ENCODE measurements at regions of chr1 and their contacts with region 1.

Region 1: DNA sequence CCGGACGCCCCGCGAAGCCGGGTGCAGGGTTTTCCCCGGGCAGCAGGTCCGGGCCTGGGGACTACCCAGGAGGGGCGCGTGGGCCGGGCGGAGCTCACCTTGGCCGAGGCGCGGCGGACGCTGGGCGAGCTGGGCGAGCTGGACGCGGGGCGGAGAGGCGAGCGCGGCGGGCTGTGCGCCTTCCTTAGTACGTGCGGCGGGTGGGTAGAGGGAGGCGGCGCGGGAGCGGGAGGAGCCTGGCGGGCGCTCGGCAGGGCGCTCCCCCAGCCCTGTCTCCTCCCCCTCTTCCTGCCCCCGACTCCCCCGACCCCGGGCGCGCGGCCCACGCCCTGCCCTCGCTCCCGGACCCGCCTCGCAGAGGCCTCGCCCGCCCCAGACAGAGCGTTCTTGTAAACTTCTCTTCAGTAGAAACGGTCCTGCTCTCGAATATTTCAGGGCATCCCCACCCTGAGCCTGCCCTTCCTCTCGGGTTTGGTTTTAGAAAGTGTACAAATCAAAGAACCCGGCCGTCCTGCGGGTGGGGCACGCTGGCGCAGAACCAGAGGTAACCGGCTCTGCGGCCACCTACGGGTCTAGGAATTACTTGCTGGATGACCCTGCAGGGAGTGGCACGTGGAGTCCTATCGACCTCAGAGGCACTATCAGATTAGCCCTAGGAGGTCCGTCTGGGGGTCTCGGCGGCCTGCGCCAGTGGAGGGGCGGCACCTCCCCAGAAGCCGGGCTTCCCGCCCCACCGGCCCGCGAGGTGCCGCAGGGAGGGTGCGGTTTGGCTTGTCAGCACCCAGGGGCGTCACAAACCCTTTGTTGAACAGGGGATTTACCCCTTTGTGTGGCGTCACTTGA is at the start of gene S100A10:
- DNase-seq: peak; percentile 92
- H3K4me3 ChIP-seq: peak within 1 kb of the TSS; percentile 94
- H3K27ac ChIP-seq: peak within 1 kb of the TSS; percentile 99
- H3K4me1 ChIP-seq: peaks cover 77% of the 10 kb centered on the region
- H3K27me3 ChIP-seq: no peaks in the 10 kb centered on the region
- CTCF ChIP-seq: no peak
- total RNA-seq, gene S100A10: 966 and 1,436 TPM in 2 replicates

Region 2: DNA sequence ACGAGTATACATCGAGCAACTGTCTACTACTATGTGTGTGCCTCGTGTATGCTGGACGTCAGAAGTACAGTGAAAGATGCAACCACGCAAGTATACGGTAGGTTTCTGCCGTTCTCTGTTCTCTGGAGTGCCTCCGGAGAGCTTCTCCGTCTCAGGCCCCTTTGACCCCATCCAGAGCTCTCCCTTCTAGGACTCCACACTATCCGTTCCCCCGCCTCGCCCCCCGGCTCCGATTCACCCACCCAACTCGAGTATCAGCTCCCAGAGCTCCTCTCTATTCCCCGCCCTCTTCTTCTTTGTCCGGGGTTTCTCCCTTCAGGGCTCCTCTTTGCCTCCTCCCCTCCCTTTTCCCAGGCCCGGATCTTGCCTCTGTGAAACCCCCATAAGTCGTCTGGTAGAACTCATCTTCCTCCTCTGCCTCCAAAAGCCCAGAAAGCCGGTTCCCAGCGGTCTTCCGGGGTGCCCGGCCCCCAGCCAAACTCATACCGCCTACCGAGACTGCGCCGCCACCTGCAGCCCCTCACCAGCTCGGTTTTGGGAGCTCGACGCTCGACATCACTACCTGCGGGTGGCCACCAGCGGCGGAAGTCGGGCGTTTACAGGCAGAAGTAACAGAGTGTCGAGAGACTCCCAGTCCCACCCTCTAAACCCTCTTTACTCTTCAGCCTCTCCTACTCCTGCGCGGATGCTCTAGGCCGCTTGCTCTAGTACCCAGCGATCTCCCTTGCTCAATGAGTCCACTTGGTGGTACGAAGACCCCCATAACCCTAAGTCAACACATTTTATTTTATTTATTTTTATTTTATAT is 804.0 kb before region 1 on chr1 and contains the start of gene VPS72:
- CTCF ChIA-PET with region 1: no interaction called
- POLR2A ChIA-PET with region 1: no interaction called
- intact Hi-C with region 1: loop called (anchors 2 kb)
- DNase-seq: peak; percentile 80
- H3K4me3 ChIP-seq: peak within 1 kb of the TSS; percentile 71
- H3K27ac ChIP-seq: peak within 1 kb of the TSS; percentile 72
- H3K4me1 ChIP-seq: peaks cover 26% of the 10 kb centered on the region
- H3K27me3 ChIP-seq: no peaks in the 10 kb centered on the region
- CTCF ChIP-seq: no peak; the same call in 1 of the 2 replicates
- total RNA-seq, gene VPS72: 63.9 and 72.5 TPM in 2 replicates

Region 3: GRCh38 chr1:151668090-151668489 is 325.8 kb before region 1 on chr1:
- CTCF ChIA-PET with region 1: no interaction called
- POLR2A ChIA-PET with region 1: no interaction called
- intact Hi-C with region 1: no loop called
- DNase-seq: no peak
- H3K4me3 ChIP-seq: no peak overlapping the region
- H3K27ac ChIP-seq: no peak overlapping the region
- H3K4me1 ChIP-seq: no peaks in the 10 kb centered on the region
- H3K27me3 ChIP-seq: no peaks in the 10 kb centered on the region
- CTCF ChIP-seq: no peak

Region 4: DNA sequence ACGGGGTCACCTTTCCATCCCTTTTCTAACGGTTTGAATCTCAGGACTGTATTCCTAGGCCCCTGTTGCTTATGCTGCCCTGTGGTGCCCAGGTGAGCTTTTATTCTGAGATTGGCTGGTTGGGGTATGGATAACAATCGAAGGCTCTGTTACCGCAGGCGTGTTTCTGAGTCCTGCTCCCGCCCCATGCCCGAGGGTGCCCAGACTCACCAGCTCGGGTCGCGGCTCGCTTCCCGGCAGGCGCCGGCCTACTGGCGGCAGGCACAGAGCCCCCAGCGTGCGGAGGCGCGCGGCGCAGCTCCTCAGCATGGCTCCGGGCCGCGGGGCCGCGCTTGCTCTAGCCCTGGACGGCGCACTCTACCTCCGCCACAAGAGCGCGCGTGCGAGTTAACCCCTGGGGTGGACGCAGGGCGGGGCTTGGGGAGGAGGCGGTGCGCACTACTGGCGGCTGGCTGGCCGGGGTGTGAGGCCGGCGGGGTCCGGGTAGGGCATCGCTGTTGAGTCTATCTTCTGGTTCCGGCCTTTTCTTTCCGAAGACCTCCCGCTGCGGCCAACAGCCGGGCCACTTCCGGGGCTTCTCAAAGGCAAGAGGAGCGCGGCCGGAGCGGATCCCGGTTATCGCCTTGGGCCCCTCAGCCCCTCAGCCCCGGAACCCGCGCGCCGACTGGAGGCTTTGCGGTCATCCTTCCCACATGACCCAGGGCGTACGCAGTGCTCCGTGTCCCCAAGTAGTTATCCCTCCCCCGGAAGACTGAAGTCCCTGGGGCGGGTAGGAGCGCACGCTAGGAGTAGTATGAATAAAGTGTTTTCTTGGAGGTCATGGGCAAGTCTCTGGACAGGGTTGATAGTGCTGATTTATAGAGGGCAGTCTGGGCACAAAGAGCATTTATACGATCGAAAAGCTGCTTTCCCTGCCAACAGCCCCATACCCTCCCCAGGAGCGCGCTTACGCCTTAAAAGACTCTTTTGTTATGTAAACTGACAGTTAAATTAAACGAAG is 84.4 kb before region 1 on chr1 and contains the start of gene THEM4:
- CTCF ChIA-PET with region 1: no interaction called
- POLR2A ChIA-PET with region 1: interaction called, 8 read pairs
- intact Hi-C with region 1: loop called (anchors 5 kb)
- DNase-seq: peak; percentile 87 to 98
- H3K4me3 ChIP-seq: peak within 1 kb of the TSS; percentile 78
- H3K27ac ChIP-seq: peak within 1 kb of the TSS; percentile 84
- H3K4me1 ChIP-seq: peaks cover 30% of the 10 kb centered on the region
- H3K27me3 ChIP-seq: no peaks in the 10 kb centered on the region
- CTCF ChIP-seq: no peak
- total RNA-seq, gene THEM4: 24.1 and 41.4 TPM in 2 replicates

Region 5: GRCh38 chr1:151945725-151946364 is 48.0 kb before region 1 on chr1:
- CTCF ChIA-PET with region 1: no interaction called
- POLR2A ChIA-PET with region 1: interaction called, 18 read pairs
- intact Hi-C with region 1: no loop called
- DNase-seq: peak; percentile 96 to 97
- H3K4me3 ChIP-seq: peak overlapping the region; percentile 35; the same call in 1 of the 2 replicates
- H3K27ac ChIP-seq: peak overlapping the region; percentile 91
- H3K4me1 ChIP-seq: peaks cover 72% of the 10 kb centered on the region
- H3K27me3 ChIP-seq: no peaks in the 10 kb centered on the region
- CTCF ChIP-seq: no peak

Region 6: GRCh38 chr1:152029144-152029928 is 35.5 kb after region 1 on chr1:
- CTCF ChIA-PET with region 1: no interaction called
- POLR2A ChIA-PET with region 1: interaction called, 22 read pairs
- intact Hi-C with region 1: no loop called
- DNase-seq: peak; percentile 50 to 77
- H3K4me3 ChIP-seq: peak overlapping the region; percentile 20; the same call in 1 of the 2 replicates
- H3K27ac ChIP-seq: peak overlapping the region; percentile 97
- H3K4me1 ChIP-seq: peaks cover 86% of the 10 kb centered on the region
- H3K27me3 ChIP-seq: no peaks in the 10 kb centered on the region
- CTCF ChIP-seq: no peak

Region 7: GRCh38 chr1:152162806-152163463 is 169.1 kb after region 1 on chr1:
- CTCF ChIA-PET with region 1: interaction called, 7 read pairs
- POLR2A ChIA-PET with region 1: interaction called, 8 read pairs
- intact Hi-C with region 1: loop called (anchors 5 kb)
- DNase-seq: peak in 1 of 2 experiments; percentile 97
- H3K4me3 ChIP-seq: no peak overlapping the region
- H3K27ac ChIP-seq: peak overlapping the region; percentile 78
- H3K4me1 ChIP-seq: peaks cover 59% of the 10 kb centered on the region
- H3K27me3 ChIP-seq: no peaks in the 10 kb centered on the region
- CTCF ChIP-seq: 0 out of 2 replicates have a peak, but pooled peaks have one; percentile 29